ENCODE measurements at regions of chr11 and their contacts with region 1.

Region 1: GRCh38 chr11:41281131-41281742 is 178.2 kb downstream of the LRRC4C start:
- DNase-seq: no peak
- H3K4me3 ChIP-seq: no peak overlapping the region
- H3K27ac ChIP-seq: no peak overlapping the region
- H3K4me1 ChIP-seq: no peaks in the 10 kb centered on the region
- H3K27me3 ChIP-seq: no peaks in the 10 kb centered on the region
- CTCF ChIP-seq: no peak

Region 2: DNA sequence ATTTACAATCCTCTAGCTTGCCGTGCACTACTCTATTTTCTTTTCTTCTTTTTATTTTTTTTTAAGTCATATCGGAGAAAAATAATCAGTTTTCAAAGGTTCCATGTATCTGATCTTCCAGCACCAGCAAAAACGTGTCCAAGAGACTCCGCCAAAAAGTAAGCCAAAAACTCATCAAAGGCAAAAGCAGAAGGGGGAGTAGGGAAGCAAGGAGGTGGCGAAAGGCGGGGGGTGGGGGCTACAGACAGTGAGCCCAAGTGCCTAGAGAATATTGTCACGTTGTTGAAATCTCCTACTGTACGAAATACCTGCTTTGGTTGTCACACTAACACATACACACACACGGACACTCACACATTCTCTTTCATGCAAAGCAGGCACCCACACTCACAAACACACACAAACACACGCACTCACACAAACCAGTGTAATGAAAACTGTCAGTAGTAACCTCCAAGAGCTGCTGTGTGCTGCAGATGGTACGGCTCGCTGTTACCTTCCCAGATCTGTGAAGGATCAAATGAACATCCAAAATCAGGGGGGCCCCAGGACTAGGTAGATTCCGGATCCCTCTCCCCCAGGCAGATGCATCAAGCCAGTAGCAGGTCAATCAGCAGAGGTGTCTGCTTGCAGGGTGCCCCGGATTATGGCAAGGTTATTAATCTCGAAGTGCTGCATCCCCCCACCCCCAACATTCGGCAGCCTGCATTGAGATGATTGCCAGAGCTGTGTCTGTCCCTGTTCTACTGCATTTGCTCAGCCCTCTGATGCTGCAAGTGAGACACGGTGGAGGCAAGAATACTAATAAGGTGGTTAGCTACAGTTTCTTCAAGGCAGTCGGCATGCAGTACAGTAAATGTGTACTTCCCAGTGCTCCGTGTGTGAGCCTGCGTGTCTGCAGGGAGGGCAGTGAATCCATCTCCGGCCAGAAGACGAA is 178.5 kb after region 1 on chr11 and contains the start of gene LRRC4C:
- intact Hi-C with region 1: no loop called
- DNase-seq: no peak
- H3K4me3 ChIP-seq: no peak within 1 kb of the TSS
- H3K27ac ChIP-seq: no peak within 1 kb of the TSS
- H3K4me1 ChIP-seq: peaks cover 0 to 4% (median 3%) of the 10 kb centered on the region in 4 donors
- H3K27me3 ChIP-seq: peaks cover 0 to 7% of the 10 kb centered on the region in 2 donors
- CTCF ChIP-seq: no peak

Region 3: DNA sequence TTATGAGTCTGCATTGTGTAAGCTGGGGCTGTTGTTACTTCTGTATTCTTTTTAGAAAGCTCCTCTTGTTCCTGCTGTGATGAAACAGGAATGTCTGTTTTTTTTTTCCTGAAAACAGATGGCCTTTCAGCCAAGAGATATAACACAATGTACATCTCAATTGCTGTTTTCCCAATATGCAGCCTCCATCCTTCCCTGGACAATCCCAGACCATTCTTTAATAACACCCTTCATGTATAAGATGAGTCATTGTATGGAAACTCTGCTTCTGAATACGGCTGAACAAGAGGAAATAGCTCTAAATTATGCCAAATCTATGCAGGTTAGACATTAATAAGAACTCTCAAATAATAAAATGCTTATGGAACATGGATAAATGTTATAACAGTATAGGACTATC is 238.5 kb after region 1 on chr11:
- intact Hi-C with region 1: loop called (anchors 5 kb)
- DNase-seq: no peak
- H3K4me3 ChIP-seq: no peak overlapping the region
- H3K27ac ChIP-seq: no peak overlapping the region
- H3K4me1 ChIP-seq: no peaks in the 10 kb centered on the region
- H3K27me3 ChIP-seq: no peaks in the 10 kb centered on the region
- CTCF ChIP-seq: no peak

Measured in tibial artery (tissue), 4 donors.